RWPE1 (cell line): ENCODE measurements at regions of chr7 and their contacts with region 1.

Region 1: GRCh38 chr7:12458520-12459131 is 55.0 kb upstream of the VWDE start:
- DNase-seq: peak; percentile 62
- H3K27ac ChIP-seq: no peak overlapping the region
- CTCF ChIP-seq: peak; percentile 79

Region 2: DNA sequence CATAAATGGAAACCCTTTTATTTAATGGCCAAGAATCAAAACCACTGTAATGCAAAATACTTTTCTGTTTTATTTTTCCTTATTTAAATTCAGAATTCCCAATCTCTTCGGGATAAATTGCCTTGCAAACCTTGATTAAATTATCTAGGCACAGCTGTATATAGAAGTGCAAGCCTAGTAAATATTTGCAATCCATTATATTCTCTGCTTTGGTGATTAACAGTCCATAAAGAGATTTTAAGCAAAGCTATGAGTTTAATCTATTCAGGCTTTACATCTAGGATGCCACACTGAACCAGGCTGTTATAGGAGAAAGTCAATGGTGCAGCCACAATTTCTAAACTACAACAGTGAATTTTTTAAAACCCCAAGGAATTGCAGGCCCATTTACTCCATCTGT is 583.0 kb before region 1 on chr7:
- CTCF ChIA-PET with region 1: no interaction called
- POLR2A ChIA-PET with region 1: no interaction called
- DNase-seq: no peak
- H3K27ac ChIP-seq: no peak overlapping the region
- CTCF ChIP-seq: no peak

Region 3: GRCh38 chr7:12434009-12434642 is 24.5 kb before region 1 on chr7:
- CTCF ChIA-PET with region 1: interaction called, 10 read pairs
- POLR2A ChIA-PET with region 1: no interaction called
- DNase-seq: peak; percentile 18
- H3K27ac ChIP-seq: no peak overlapping the region
- CTCF ChIP-seq: peak; percentile 68

Region 4: GRCh38 chr7:12475362-12476063 is 16.9 kb after region 1 on chr7:
- CTCF ChIA-PET with region 1: interaction called, 10 read pairs
- POLR2A ChIA-PET with region 1: no interaction called
- DNase-seq: peak; percentile 41
- H3K27ac ChIP-seq: no peak overlapping the region
- CTCF ChIP-seq: no peak

Region 5: DNA sequence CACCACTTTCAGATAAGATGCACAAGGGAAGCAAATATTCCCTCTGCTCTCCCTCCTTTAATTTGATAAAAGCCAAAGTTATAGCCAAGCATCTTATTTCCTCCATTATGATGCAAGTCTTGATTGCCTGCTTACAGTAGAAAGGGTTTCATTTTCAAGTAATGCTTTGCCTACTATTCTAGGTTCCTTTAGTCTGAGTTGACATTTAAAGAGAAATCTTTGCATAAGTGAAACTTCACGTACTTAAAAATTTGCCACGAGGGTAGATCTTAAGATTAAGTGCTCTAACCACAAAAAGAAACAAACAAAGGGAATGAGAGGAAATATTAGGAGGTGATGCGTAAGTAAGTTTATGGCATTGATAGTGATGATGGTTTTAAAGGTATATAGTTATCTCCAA is 23.1 kb after region 1 on chr7:
- CTCF ChIA-PET with region 1: interaction called, 11 read pairs
- POLR2A ChIA-PET with region 1: no interaction called
- DNase-seq: no peak
- H3K27ac ChIP-seq: no peak overlapping the region
- CTCF ChIP-seq: no peak

Region 6: GRCh38 chr7:12490117-12490688 is 31.6 kb after region 1 on chr7:
- CTCF ChIA-PET with region 1: interaction called, 23 read pairs
- POLR2A ChIA-PET with region 1: no interaction called
- DNase-seq: peak; percentile 38
- H3K27ac ChIP-seq: no peak overlapping the region
- CTCF ChIP-seq: peak; percentile 63

Region 7: GRCh38 chr7:12570534-12571461 is 112.2 kb after region 1 on chr7 and contains the start of gene SCIN:
- CTCF ChIA-PET with region 1: no interaction called
- POLR2A ChIA-PET with region 1: no interaction called
- DNase-seq: peak; percentile 20
- H3K27ac ChIP-seq: no peak within 1 kb of the TSS
- CTCF ChIP-seq: no peak